ENCODE measurements at regions of chr13 and their contacts with region 1.

Region 1: DNA sequence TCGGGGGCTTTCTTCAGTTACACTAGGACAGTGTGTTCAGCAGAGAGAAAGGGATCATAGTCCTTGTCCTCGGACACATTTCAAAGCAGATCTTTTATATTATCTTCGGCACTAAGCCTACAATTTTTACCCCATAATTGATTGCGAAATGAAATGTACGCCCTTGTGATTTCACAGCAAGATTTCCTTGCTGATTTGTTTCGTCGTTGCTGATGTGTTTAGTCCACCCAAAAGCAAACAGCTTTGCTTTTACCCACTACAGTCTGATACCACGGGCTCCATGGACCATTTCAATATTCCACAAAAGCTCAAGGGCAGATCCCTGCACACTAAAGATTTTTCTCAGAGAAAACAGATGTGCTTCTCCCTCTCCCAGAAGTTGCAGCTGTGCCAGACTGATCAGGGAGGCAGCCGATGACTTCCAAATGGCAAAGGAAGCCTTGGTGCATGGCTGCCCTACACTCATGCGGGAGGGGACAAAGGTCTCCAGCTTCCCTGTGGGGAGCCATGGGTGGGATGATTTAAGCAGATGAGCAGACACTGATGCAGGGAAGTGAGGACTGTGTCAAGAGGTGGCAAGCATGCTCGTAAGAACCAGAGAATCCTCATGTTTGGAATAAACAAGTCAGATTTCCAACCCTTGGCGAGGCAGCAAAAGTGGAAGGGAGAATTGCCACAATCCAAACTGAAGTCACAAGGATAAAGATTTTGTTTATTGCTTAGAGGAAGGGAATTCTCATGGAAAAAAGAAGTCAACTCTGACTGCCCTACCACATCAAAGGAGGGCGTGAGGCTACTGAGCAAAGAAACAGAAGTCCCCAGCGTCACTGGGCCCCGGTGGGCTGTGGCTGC is 81.1 kb downstream of the STK24 start:
- DNase-seq: peak; percentile 86 to 87
- H3K4me3 ChIP-seq: no peak overlapping the region
- H3K27ac ChIP-seq: peak overlapping the region; percentile 72 to 73
- H3K4me1 ChIP-seq: peaks cover 0 to 69% (median 38%) of the 10 kb centered on the region in 4 donors
- H3K27me3 ChIP-seq: no peaks in the 10 kb centered on the region
- CTCF ChIP-seq: no peak

Region 2: GRCh38 chr13:98184792-98185191 is 311.1 kb before region 1 on chr13:
- intact Hi-C with region 1: no loop called
- DNase-seq: no peak
- H3K4me3 ChIP-seq: no peak overlapping the region
- H3K27ac ChIP-seq: peak overlapping the region; percentile 51 to 61
- H3K4me1 ChIP-seq: peaks cover 5 to 65% (median 27%) of the 10 kb centered on the region in 4 donors
- H3K27me3 ChIP-seq: no peaks in the 10 kb centered on the region
- CTCF ChIP-seq: no peak

Region 3: GRCh38 chr13:98565726-98566565 is 70.1 kb after region 1 on chr13:
- intact Hi-C with region 1: loop called (anchors 5 kb)
- DNase-seq: peak in 1 of 2 donors; percentile 76
- H3K4me3 ChIP-seq: peak overlapping the region; percentile 25 to 27
- H3K27ac ChIP-seq: peak overlapping the region; percentile 62 to 73
- H3K4me1 ChIP-seq: peaks cover 0 to 77% (median 52%) of the 10 kb centered on the region in 4 donors
- H3K27me3 ChIP-seq: no peaks in the 10 kb centered on the region
- CTCF ChIP-seq: peak in 1 of 2 experiments; percentile 26

Measured in tibial artery (tissue), 4 donors.